Naive thymus-derived CD4-positive, alpha-beta T cell (primary cell): ENCODE measurements at regions of chr4 and their contacts with region 1.

Region 1: DNA sequence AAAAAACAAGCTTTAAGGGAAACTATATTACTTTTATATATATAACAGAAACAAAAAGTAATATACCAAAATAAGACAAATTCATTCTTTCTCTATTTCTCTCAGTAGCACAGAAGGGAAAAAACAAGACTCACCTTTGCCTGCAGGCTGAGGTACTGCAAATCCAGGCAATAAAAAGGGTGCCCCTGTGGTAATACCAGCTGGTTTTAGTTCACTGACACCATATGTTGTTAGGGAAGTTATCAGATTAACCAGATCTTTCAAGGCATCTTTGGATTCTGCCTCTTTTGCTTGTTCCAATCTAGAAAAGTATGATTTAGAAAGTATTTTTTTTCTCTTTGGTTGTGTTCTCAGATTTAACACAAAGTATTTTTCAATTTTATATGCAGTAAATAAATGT is 139.8 kb downstream of the WDFY3 start:
- DNase-seq: no peak
- ATAC-seq: no peak
- H3K4me3 ChIP-seq: no peak overlapping the region
- H3K4me3 Mint-ChIP-seq: no peak overlapping the region
- H3K27ac ChIP-seq: no peak overlapping the region
- H3K27ac Mint-ChIP-seq: no peak overlapping the region
- H3K4me1 ChIP-seq: no peaks in the 10 kb centered on the region
- H3K4me1 Mint-ChIP-seq: no peaks in the 10 kb centered on the region
- H3K27me3 ChIP-seq: no peaks in the 10 kb centered on the region
- H3K27me3 Mint-ChIP-seq: peaks cover 0 to 5% (median 0%) of the 10 kb centered on the region in 5 donors

Region 2: GRCh38 chr4:84804136-84804535 is 22.5 kb before region 1 on chr4:
- CTCF ChIA-PET with region 1: no interaction called
- POLR2A ChIA-PET with region 1: no interaction called
- intact Hi-C with region 1: loop called in 1 of 2 experiments (anchors 1 kb)
- DNase-seq: no peak
- ATAC-seq: no peak
- H3K4me3 ChIP-seq: no peak overlapping the region
- H3K4me3 Mint-ChIP-seq: no peak overlapping the region
- H3K27ac ChIP-seq: no peak overlapping the region
- H3K27ac Mint-ChIP-seq: no peak overlapping the region
- H3K4me1 ChIP-seq: no peaks in the 10 kb centered on the region
- H3K4me1 Mint-ChIP-seq: no peaks in the 10 kb centered on the region
- H3K27me3 ChIP-seq: no peaks in the 10 kb centered on the region
- H3K27me3 Mint-ChIP-seq: no peaks in the 10 kb centered on the region